Dendritic cell treated with granulocyte-macrophage colony-stimulating factor and Interleukin-4, amounts not matched to agents 40 ng/mL and 50 ng/mL, for 4 days (primary cell): ENCODE measurements at regions of chr4 and their contacts with region 1.

Region 1: GRCh38 chr4:83034630-83035494 is at the start of gene COPS4:
- H3K4me3 Mint-ChIP-seq: peak within 1 kb of the TSS; percentile 99
- H3K27ac Mint-ChIP-seq: peak within 1 kb of the TSS; percentile 97
- H3K4me1 Mint-ChIP-seq: peaks cover 16% of the 10 kb centered on the region
- H3K27me3 Mint-ChIP-seq: no peaks in the 10 kb centered on the region

Region 2: DNA sequence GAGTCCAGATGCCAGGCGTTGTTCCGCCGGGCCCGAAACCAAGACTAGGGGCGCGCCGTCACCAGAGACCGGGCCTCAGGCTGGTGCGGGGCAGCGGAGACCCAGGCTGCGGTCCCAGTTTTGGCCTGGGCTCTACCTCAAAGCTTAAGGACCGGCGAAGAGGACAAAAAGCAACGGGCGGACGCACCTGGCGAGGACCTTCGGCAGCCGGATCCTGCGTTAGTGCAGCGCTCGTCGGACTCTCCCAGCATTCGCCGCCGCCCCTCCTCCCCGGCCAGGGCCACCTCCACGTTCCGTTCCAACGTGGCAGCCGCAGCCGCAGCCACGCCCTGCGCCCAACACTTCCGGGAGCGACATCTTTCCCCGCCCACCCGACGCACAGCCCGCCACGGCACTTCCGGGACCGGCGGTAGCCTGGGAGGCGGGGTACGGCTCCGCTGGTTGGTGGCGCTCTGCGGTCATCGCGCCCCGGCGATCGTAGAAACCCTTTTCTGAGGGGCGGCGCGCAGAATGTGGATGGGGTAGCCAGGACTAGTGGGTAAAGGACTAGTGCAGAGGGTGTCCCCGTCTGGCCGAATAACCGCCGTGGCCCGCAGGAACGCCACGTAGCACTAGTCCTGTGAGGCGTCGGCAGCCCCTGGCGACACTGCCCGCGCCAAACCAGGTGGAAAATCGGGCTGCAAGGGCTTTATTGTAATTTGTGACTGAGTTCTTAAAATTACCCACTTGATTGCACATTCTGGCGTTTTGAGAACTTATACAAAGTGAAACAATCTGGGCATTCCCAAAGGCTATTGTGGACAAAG is 143.8 kb before region 1 on chr4 and contains the start of gene SEC31A:
- intact Hi-C with region 1: loop called (anchors 5 kb)
- H3K4me3 Mint-ChIP-seq: peak within 1 kb of the TSS; percentile 87
- H3K27ac Mint-ChIP-seq: peak within 1 kb of the TSS; percentile 97
- H3K4me1 Mint-ChIP-seq: peaks cover 19% of the 10 kb centered on the region
- H3K27me3 Mint-ChIP-seq: no peaks in the 10 kb centered on the region

Region 3: DNA sequence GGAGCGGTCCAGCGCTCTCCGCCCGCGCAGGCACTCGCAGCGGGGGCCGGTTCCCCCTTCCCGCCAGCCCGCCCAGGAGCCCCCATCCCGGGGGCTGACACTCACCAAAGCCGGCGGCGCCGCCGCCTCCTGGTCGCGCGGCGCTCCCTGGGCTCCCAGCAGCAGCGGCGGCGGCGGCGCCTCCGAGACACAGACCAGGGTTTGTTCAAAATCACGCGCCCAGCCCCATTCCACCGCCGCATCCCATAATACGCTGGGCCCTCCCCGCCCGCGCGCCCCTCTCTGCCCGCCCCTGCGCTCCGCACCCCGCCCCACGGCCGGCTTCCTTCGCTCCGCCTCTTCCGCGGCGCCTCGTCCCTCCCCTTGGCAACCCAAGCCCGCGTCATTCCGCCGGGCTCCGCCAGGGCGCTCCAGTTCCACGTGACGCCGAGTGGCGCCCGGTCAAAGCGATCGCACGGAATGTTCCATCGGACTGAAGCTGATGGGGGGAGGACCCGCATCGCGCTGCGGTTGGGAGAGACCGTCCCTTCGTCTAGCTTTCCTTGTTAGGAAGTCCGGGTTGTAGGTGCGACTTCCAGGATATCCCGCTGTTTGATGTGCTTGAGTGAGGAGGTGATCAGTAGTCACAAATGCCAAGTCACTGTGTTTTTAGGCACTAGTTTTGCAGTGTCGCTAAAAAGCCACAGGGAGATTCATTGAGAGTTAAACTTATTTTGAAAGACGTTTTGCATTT is 22.0 kb before region 1 on chr4:
- intact Hi-C with region 1: loop called (anchors 1 kb)
- H3K4me3 Mint-ChIP-seq: peak overlapping the region; percentile 86
- H3K27ac Mint-ChIP-seq: peak overlapping the region; percentile 95
- H3K4me1 Mint-ChIP-seq: peaks cover 33% of the 10 kb centered on the region
- H3K27me3 Mint-ChIP-seq: no peaks in the 10 kb centered on the region